PC-9 (cell line): ENCODE measurements at regions of chr9 and their contacts with region 1.

Region 1: GRCh38 chr9:18255158-18255629 is 218.8 kb upstream of the ADAMTSL1 start:
- DNase-seq: peak in 1 of 2 experiments; percentile 52
- H3K4me3 ChIP-seq: no peak overlapping the region
- H3K27ac ChIP-seq: no peak overlapping the region
- H3K4me1 ChIP-seq: no peaks in the 10 kb centered on the region
- H3K27me3 ChIP-seq: no peaks in the 10 kb centered on the region
- CTCF ChIP-seq: peak; percentile 92

Region 2: DNA sequence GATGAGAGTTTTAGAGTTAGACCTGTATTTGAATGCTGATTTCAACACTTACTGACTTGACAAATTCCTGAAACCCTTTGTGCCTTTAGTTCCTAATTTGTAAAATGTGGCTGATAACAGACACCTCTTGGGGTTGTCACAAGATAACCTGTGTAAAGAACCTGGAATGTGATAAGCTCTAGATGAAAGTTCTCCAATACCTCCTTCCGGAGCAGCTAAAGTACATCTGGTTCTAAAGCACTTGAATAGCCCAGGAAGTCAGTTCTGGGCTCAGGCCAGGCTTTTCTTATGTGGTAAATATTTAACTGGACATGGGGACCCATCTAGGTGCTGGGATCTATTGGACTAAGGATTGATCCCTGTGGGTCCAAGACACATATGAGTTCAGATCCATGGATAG is 92.0 kb before region 1 on chr9:
- CTCF ChIA-PET with region 1: no interaction called
- POLR2A ChIA-PET with region 1: no interaction called
- intact Hi-C with region 1: no loop called
- DNase-seq: no peak
- H3K4me3 ChIP-seq: no peak overlapping the region
- H3K27ac ChIP-seq: no peak overlapping the region
- H3K4me1 ChIP-seq: no peaks in the 10 kb centered on the region
- H3K27me3 ChIP-seq: peaks cover 9% of the 10 kb centered on the region; the same call in 1 of the 2 replicates
- CTCF ChIP-seq: no peak

Region 3: GRCh38 chr9:18442629-18443491 is 187.7 kb after region 1 on chr9:
- CTCF ChIA-PET with region 1: interaction called, 6 read pairs
- POLR2A ChIA-PET with region 1: no interaction called
- intact Hi-C with region 1: loop called (anchors 5 kb)
- DNase-seq: peak in 1 of 2 experiments; percentile 46
- H3K4me3 ChIP-seq: no peak overlapping the region
- H3K27ac ChIP-seq: no peak overlapping the region
- H3K4me1 ChIP-seq: no peaks in the 10 kb centered on the region
- H3K27me3 ChIP-seq: no peaks in the 10 kb centered on the region
- CTCF ChIP-seq: peak; percentile 80